ENCODE measurements at regions of chr19 and their contacts with region 1.

Region 1: DNA sequence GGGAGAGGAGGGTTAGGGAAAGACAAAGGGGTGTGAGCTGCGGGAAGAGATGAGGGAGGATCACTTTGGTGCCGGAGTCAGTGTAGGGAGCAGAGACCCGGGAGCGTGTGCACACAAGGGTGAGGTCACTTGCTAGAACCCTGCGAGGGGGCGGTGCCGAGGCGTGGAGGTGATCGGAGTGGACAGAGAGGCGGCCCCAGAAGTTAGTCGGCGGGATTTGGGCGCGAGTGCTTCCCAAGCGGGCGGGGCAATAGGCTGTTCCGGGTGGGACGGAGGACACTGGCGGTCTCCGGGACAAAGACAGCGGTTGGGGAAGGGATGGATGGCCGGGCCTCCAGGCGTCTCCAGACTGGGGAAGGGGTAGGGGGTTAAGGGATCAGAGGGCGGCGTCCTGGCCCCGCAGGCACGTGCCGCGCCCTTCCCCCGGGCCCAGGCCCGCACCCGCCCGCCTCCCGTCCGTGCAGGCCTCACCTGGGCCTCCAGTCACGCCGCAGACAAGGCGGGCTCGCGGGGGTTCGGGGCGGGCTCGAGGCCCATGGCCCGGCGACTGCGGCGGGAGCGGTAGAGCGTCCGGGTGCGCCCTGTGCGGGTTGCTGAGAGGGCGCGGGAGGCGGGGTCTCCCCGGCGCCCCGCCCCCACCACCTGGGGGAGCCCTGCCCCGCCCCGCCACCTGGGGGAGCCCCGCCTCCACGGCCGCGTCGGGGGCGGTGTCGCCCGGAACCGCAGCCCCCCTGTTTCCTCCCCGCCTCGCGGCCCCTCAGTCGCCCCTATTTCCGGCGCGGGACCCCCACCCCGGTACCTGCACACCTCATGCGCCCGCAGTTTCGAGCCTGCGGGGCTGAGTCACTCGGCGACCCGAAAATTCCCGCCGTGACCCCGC is at the start of gene LPAR2:
- DNase-seq: peak; percentile 77 to 93 (median 84)
- ATAC-seq: peak; percentile 80 to 84
- H3K4me3 Mint-ChIP-seq: peak within 1 kb of the TSS; percentile 85 to 99 (median 98)
- H3K27ac Mint-ChIP-seq: peak within 1 kb of the TSS; percentile 93 to 99 (median 96)
- H3K4me1 Mint-ChIP-seq: peaks cover 15 to 38% (median 27%) of the 10 kb centered on the region in 4 donors
- H3K27me3 Mint-ChIP-seq: no peaks in the 10 kb centered on the region
- polyA plus RNA-seq, gene LPAR2: 12.9 to 38.0 (median 16.7) TPM

Region 2: GRCh38 chr19:19420570-19421298 is 207.1 kb before region 1 on chr19:
- POLR2A ChIA-PET with region 1: no interaction called
- DNase-seq: peak in 3 of 10 donors; percentile 16 to 60 (median 36)
- ATAC-seq: peak; percentile 46 to 77
- H3K4me3 Mint-ChIP-seq: peak overlapping the region in 9 of 10 donors; percentile 15 to 75 (median 54)
- H3K27ac Mint-ChIP-seq: peak overlapping the region; percentile 63 to 93 (median 80)
- H3K4me1 Mint-ChIP-seq: peaks cover 36 to 92% (median 82%) of the 10 kb centered on the region in 4 donors
- H3K27me3 Mint-ChIP-seq: no peaks in the 10 kb centered on the region

Region 3: DNA sequence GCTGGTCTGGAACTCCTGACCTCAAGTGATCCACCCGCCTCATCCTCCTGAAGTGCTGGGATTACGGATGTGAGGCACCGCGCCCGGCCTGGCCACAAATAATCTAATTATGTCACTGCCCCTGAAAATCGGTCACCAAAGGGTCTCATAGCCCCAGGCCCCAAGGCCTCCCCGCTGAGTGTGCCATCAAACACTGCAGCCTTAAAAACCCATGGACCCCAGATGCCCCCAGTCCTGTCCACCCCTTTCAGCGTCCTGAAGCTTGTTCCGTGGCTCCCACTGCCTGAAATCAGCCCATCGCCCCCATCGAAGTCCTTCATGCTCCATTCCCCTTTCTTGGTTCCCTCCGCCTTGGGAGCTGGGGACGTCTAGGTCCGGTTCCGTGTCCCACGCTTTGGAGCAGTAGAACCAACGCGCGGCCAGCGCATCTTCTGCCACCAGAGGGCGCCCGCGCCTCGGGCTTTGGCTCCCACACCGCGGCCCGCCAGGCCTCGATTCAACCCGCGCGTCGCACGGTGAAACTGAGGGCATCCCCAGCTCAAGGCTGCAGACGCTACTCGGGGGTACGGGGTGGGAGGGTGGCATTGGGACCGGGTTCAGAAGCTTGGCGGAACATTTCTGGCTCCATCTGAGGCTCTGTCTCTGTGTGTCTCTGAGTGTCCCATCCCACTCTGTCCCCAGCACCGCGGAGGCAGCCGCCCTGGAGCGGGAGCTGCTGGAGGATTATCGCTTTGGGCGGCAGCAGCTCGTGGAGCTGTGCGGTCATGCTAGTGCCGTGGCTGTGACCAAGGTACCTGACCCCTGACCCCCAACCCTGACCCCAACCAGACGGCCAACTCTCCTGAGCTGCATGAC is 95.7 kb before region 1 on chr19:
- POLR2A ChIA-PET with region 1: interaction called, 11 read pairs
- DNase-seq: peak; percentile 73 to 90 (median 85)
- ATAC-seq: peak; percentile 83 to 89
- H3K4me3 Mint-ChIP-seq: peak overlapping the region in 3 of 10 donors; percentile 24 to 49 (median 28)
- H3K27ac Mint-ChIP-seq: peak overlapping the region in 7 of 10 donors; percentile 37 to 98 (median 88)
- H3K4me1 Mint-ChIP-seq: peaks cover 4 to 21% (median 17%) of the 10 kb centered on the region in 4 donors
- H3K27me3 Mint-ChIP-seq: no peaks in the 10 kb centered on the region

Region 4: DNA sequence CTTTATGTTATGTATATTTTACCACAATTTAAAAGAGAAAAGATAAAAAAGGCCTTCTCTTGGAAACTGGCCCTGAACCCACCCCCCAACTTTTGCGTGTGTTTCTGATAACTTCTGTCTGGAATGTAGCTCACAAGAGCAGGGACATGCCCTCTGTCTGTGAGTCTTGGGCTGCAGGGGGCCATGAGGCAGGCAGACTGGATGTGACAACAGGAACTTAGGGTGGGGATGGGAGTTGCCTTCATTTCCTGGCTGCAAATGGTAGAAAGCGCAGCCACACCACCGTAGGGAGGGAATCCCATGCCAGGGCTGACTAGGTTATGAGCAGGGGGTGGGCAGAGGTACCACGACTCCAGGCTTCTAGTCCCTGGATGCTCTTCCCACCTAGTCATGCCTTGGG is 67.9 kb before region 1 on chr19:
- POLR2A ChIA-PET with region 1: interaction called, 11 read pairs
- DNase-seq: no peak
- ATAC-seq: no peak
- H3K4me3 Mint-ChIP-seq: no peak overlapping the region
- H3K27ac Mint-ChIP-seq: peak overlapping the region in 5 of 10 donors; percentile 47 to 87 (median 79)
- H3K4me1 Mint-ChIP-seq: peaks cover 13 to 31% (median 20%) of the 10 kb centered on the region in 4 donors
- H3K27me3 Mint-ChIP-seq: no peaks in the 10 kb centered on the region

Region 5: DNA sequence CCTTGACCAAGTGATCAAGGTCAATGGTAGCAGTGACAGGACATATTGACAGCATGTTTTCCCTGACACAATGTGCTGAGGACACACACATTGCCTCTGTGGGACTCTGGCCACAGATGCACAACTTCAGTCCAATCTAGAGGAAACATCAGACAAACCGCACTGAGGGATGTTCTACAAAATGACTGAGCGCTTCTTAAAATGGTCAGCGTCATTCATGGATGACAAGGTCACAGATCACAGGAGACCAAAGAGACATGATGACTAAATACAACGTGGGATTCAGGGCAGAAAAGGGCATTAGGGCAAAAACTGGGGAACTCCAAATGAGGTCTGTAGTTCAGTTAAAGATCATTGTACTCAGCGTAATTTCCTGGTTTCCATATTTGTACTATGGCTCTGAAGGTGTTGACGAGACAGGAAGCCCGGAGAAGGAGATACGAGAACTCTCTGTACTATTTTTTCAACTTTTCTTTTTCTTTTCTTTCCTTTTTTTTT is 30.0 kb before region 1 on chr19:
- POLR2A ChIA-PET with region 1: interaction called, 23 read pairs
- DNase-seq: peak in 8 of 10 donors; percentile 62 to 87 (median 76)
- ATAC-seq: peak; percentile 69 to 81
- H3K4me3 Mint-ChIP-seq: peak overlapping the region; percentile 62 to 87 (median 80)
- H3K27ac Mint-ChIP-seq: peak overlapping the region; percentile 90 to 99 (median 98)
- H3K4me1 Mint-ChIP-seq: peaks cover 26 to 76% (median 57%) of the 10 kb centered on the region in 4 donors
- H3K27me3 Mint-ChIP-seq: no peaks in the 10 kb centered on the region

Region 6: GRCh38 chr19:19606021-19606420 is 21.8 kb before region 1 on chr19:
- POLR2A ChIA-PET with region 1: interaction called, 10 read pairs
- DNase-seq: peak in 7 of 10 donors; percentile 37 to 73 (median 45)
- ATAC-seq: peak; percentile 73 to 85
- H3K4me3 Mint-ChIP-seq: peak overlapping the region in 8 of 10 donors; percentile 33 to 79 (median 62)
- H3K27ac Mint-ChIP-seq: peak overlapping the region; percentile 81 to 96 (median 92)
- H3K4me1 Mint-ChIP-seq: peaks cover 30 to 66% (median 50%) of the 10 kb centered on the region in 4 donors
- H3K27me3 Mint-ChIP-seq: no peaks in the 10 kb centered on the region

Region 7: GRCh38 chr19:19643158-19644053 is 15.5 kb after region 1 on chr19 and contains the start of gene GMIP:
- POLR2A ChIA-PET with region 1: interaction called, 11 read pairs
- DNase-seq: peak; percentile 77 to 94 (median 88)
- ATAC-seq: peak; percentile 91 to 92
- H3K4me3 Mint-ChIP-seq: peak within 1 kb of the TSS; percentile 96 to 99 (median 98)
- H3K27ac Mint-ChIP-seq: peak within 1 kb of the TSS; percentile 87 to 99 (median 98)
- H3K4me1 Mint-ChIP-seq: peaks cover 13 to 27% (median 20%) of the 10 kb centered on the region in 4 donors
- H3K27me3 Mint-ChIP-seq: no peaks in the 10 kb centered on the region
- polyA plus RNA-seq, gene GMIP: 40.6 to 72.4 (median 41.9) TPM

Region 8: DNA sequence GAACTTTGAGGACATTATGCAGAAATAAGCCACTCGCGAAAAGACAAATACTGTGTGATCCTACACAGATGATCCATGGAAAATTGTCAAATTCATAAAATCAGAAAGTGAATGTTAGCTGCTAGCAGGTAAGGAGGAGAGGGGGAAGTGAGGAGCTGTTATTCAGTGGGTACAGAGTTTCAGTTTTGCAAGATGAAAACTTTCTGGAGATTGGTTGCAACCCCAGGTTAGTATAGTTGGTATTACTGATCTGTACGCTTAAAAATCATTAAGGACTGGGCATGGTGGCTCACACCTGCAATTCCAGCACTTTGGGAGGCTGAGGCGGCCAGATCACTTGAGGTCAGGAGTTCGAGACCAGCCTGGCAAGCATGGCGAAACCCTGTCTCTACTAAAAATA is 58.7 kb after region 1 on chr19:
- POLR2A ChIA-PET with region 1: no interaction called
- DNase-seq: no peak
- ATAC-seq: peak in 1 of 2 donors; percentile 37
- H3K4me3 Mint-ChIP-seq: peak overlapping the region in 1 of 10 donors; percentile 1
- H3K27ac Mint-ChIP-seq: peak overlapping the region in 3 of 10 donors; percentile 17 to 75 (median 19)
- H3K4me1 Mint-ChIP-seq: peaks cover 0 to 3% (median under 1%) of the 10 kb centered on the region in 4 donors
- H3K27me3 Mint-ChIP-seq: no peaks in the 10 kb centered on the region

Region 9: DNA sequence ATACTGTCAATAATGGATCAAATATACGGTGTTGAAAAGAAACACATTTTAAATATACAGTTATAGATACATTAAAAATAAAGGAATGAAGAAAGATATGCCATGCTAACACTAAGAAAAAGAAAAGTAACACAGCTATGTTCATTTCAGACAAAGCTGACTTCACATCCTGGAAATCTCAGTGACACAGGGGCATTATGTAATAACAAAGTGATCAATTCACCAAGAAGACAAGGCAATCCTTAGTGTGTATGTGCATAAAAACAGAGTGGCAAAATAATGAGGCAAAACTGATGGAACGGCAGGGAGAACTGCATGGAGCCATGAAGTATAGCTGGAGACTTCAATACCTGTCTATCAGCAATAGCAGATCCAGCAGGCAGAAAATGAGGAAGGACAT is 91.9 kb after region 1 on chr19:
- POLR2A ChIA-PET with region 1: no interaction called
- DNase-seq: peak in 2 of 10 donors; percentile 32 to 46
- ATAC-seq: peak; percentile 60 to 64
- H3K4me3 Mint-ChIP-seq: peak overlapping the region in 1 of 10 donors; percentile 53
- H3K27ac Mint-ChIP-seq: peak overlapping the region in 1 of 10 donors; percentile 18
- H3K4me1 Mint-ChIP-seq: peaks cover 0 to 7% (median 3%) of the 10 kb centered on the region in 4 donors
- H3K27me3 Mint-ChIP-seq: no peaks in the 10 kb centered on the region

Region 10: GRCh38 chr19:19865739-19866481 is 238.0 kb after region 1 on chr19 and contains the start of gene ZNF253:
- POLR2A ChIA-PET with region 1: interaction called, 10 read pairs
- DNase-seq: peak; percentile 84 to 97 (median 93)
- ATAC-seq: peak; percentile 89 to 91
- H3K4me3 Mint-ChIP-seq: peak within 1 kb of the TSS; percentile 99 to 100 (median 100)
- H3K27ac Mint-ChIP-seq: peak within 1 kb of the TSS; percentile 96 to 99 (median 99)
- H3K4me1 Mint-ChIP-seq: peaks cover 8 to 42% (median 31%) of the 10 kb centered on the region in 4 donors
- H3K27me3 Mint-ChIP-seq: no peaks in the 10 kb centered on the region
- polyA plus RNA-seq, gene ZNF253: 7.1 to 9.4 (median 8.9) TPM

Measured in naive thymus-derived CD8-positive, alpha-beta T cell (primary cell).